ENCODE measurements at regions of chr2 and their contacts with region 1.

Region 1: GRCh38 chr2:120912101-120912985 is 176.7 kb downstream of the GLI2 start:
- DNase-seq: peak; percentile 49
- H3K4me3 ChIP-seq: no peak overlapping the region
- H3K27me3 ChIP-seq: no peaks in the 10 kb centered on the region
- CTCF ChIP-seq: no peak

Region 2: GRCh38 chr2:120749506-120750431 is 162.6 kb before region 1 on chr2:
- CTCF ChIA-PET with region 1: no interaction called
- POLR2A ChIA-PET with region 1: no interaction called
- DNase-seq: no peak
- H3K4me3 ChIP-seq: no peak overlapping the region
- H3K27me3 ChIP-seq: no peaks in the 10 kb centered on the region
- CTCF ChIP-seq: no peak

Region 3: GRCh38 chr2:121033461-121033996 is 121.2 kb after region 1 on chr2:
- CTCF ChIA-PET with region 1: no interaction called
- POLR2A ChIA-PET with region 1: no interaction called
- DNase-seq: no peak
- H3K4me3 ChIP-seq: no peak overlapping the region
- H3K27me3 ChIP-seq: peaks cover 39% of the 10 kb centered on the region
- CTCF ChIP-seq: no peak

Region 4: DNA sequence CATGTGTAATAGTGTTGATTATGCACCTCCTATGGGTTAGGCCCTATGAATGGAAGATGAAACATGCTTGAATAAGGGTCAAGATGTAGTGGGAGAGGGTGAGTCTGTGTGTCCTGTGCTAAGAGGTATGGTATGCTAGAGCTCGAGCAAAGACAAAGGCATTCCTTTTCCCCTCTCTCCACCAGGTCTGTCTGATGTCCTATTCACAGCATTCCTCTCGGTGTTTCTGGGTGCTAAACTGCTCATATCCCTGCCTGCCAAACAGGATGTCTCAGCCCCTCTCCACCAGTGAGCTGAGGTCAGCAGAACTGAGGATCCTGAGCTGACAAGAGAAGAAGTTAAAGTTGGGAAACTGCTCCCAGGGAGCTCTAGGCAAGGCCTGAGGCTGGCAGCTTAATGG is 1188.0 kb after region 1 on chr2:
- CTCF ChIA-PET with region 1: no interaction called
- POLR2A ChIA-PET with region 1: interaction called, 10 read pairs
- DNase-seq: no peak
- H3K4me3 ChIP-seq: no peak overlapping the region
- H3K27me3 ChIP-seq: peaks cover 2% of the 10 kb centered on the region; the same call in 1 of the 2 replicates
- CTCF ChIP-seq: no peak

Measured in BJ (cell line).